HEK293T (cell line): ENCODE measurements at regions of chr1 and their contacts with region 1.

Region 1: DNA sequence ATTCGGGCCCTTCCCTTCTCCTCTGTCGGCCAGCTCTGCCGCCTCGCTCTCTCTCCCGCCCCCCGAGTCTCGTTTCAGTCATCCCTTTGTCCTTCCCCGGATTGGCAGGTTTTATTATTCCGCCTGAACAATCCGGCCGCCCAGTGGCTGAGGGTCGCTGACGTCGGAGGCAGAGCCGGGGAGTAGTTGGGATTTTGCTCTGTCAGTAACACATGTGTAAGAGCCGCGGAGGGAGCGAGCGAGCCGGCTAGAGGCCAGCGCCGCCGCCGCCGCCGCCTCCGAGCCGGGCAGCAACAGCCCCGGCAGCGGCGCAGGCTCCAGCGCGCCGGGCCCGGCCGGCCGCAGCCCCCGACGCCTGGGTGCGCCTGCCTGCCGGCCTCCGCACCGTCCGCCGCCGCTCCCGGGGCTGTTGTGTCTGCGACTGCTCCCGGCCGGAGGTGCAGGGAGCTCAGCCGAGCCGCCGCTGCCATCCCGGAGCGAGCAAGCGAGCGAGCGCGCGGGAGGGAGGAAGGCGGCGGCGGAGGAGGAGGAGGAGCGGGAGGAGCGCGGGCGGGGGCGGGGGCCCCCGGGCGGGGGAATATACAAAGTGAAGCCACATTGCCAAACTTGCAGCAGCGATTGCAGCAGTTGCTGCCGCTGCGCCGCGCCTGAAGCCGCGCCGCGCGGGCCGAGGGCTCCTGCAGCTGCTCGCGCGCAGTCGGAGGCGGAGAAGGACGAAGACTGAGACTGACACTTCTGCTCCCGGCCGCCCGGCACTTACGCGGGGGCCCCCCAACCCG is at the start of gene LMO4:
- DNase-seq: peak; percentile 89

Region 2: GRCh38 chr1:87305762-87306161 is 22.7 kb before region 1 on chr1:
- CTCF ChIA-PET with region 1: interaction called, 8 read pairs
- POLR2A ChIA-PET with region 1: interaction called, 10 read pairs
- DNase-seq: no peak

Region 3: GRCh38 chr1:87853576-87854351 is 525.3 kb after region 1 on chr1:
- CTCF ChIA-PET with region 1: no interaction called
- POLR2A ChIA-PET with region 1: interaction called, 10 read pairs
- DNase-seq: no peak